Activated CD4-positive, alpha-beta T cell treated with anti-CD3 and anti-CD28 coated beads for 36 hours (primary cell): ENCODE measurements at regions of chr6 and their contacts with region 1.

Region 1: GRCh38 chr6:135675862-135676261 is 175.6 kb upstream of the PDE7B start:
- DNase-seq: peak; percentile 51
- ATAC-seq: peak; percentile 82
- H3K4me3 Mint-ChIP-seq: no peak overlapping the region
- H3K27ac Mint-ChIP-seq: no peak overlapping the region
- H3K4me1 Mint-ChIP-seq: peaks cover 19% of the 10 kb centered on the region
- H3K27me3 Mint-ChIP-seq: no peaks in the 10 kb centered on the region

Region 2: GRCh38 chr6:135382182-135382628 is 293.7 kb before region 1 on chr6:
- CTCF ChIA-PET with region 1: no interaction called
- POLR2A ChIA-PET with region 1: no interaction called
- intact Hi-C with region 1: no loop called
- DNase-seq: no peak
- ATAC-seq: peak; percentile 63
- H3K4me3 Mint-ChIP-seq: no peak overlapping the region
- H3K27ac Mint-ChIP-seq: no peak overlapping the region
- H3K4me1 Mint-ChIP-seq: no peaks in the 10 kb centered on the region
- H3K27me3 Mint-ChIP-seq: no peaks in the 10 kb centered on the region

Region 3: GRCh38 chr6:135506270-135506997 is 169.4 kb before region 1 on chr6:
- CTCF ChIA-PET with region 1: interaction called, 3 read pairs
- POLR2A ChIA-PET with region 1: no interaction called
- intact Hi-C with region 1: loop called in 1 of 2 experiments (anchors 5 kb)
- DNase-seq: no peak
- ATAC-seq: peak; percentile 81
- H3K4me3 Mint-ChIP-seq: no peak overlapping the region
- H3K27ac Mint-ChIP-seq: no peak overlapping the region
- H3K4me1 Mint-ChIP-seq: peaks cover 5% of the 10 kb centered on the region
- H3K27me3 Mint-ChIP-seq: no peaks in the 10 kb centered on the region

Region 4: DNA sequence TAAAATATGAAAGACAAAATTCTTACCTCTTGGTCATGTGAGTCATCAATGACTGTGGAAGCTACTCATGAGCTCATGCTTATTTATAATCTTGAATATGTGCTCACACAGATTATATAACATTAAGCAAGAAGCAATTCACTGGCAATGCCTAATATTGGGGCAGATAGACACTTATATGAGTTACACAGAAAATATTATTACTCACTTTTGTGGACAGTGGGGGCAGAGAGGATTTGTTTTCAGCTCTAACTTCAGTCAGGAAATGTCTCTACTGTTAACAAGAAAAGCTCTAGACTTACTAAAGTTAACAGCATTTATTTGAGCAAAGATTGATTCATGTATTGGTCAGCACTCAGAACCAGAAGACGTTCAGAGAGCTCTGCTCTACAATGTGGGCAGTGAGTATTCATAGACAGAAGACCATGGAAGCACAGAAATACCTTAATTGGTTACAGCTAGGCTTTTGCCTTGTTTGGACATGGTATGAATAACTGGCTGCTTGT is 92.6 kb before region 1 on chr6:
- CTCF ChIA-PET with region 1: no interaction called
- POLR2A ChIA-PET with region 1: no interaction called
- intact Hi-C with region 1: no loop called
- DNase-seq: no peak
- ATAC-seq: peak; percentile 53
- H3K4me3 Mint-ChIP-seq: no peak overlapping the region
- H3K27ac Mint-ChIP-seq: peak overlapping the region; percentile 14
- H3K4me1 Mint-ChIP-seq: peaks cover 21% of the 10 kb centered on the region
- H3K27me3 Mint-ChIP-seq: no peaks in the 10 kb centered on the region